Mammary epithelial cell (primary cell): ENCODE measurements at regions of chr3 and their contacts with region 1.

Region 1: GRCh38 chr3:196684548-196685407 is 27.3 kb downstream of the CEP19 start:
- DNase-seq: peak; percentile 35
- H3K4me3 ChIP-seq: no peak overlapping the region
- H3K27ac ChIP-seq: no peak overlapping the region
- H3K4me1 ChIP-seq: peaks cover 4% of the 10 kb centered on the region
- H3K27me3 ChIP-seq: no peaks in the 10 kb centered on the region
- CTCF ChIP-seq: peak; percentile 71 to 84

Region 2: GRCh38 chr3:195886181-195887141 is 798.3 kb before region 1 on chr3:
- CTCF ChIA-PET with region 1: no interaction called
- dilution Hi-C with region 1: no loop called
- in situ Hi-C with region 1: no loop called
- intact Hi-C with region 1: no loop called
- DNase-seq: no peak
- H3K4me3 ChIP-seq: no peak overlapping the region
- H3K27ac ChIP-seq: no peak overlapping the region
- H3K4me1 ChIP-seq: peaks cover 4% of the 10 kb centered on the region
- H3K27me3 ChIP-seq: no peaks in the 10 kb centered on the region
- CTCF ChIP-seq: no peak

Region 3: GRCh38 chr3:196537319-196537984 is 147.3 kb before region 1 on chr3:
- CTCF ChIA-PET with region 1: no interaction called
- dilution Hi-C with region 1: no loop called
- in situ Hi-C with region 1: no loop called
- intact Hi-C with region 1: loop called (anchors 1 kb)
- DNase-seq: peak; percentile 37
- H3K4me3 ChIP-seq: no peak overlapping the region
- H3K27ac ChIP-seq: no peak overlapping the region
- H3K4me1 ChIP-seq: no peaks in the 10 kb centered on the region
- H3K27me3 ChIP-seq: no peaks in the 10 kb centered on the region
- CTCF ChIP-seq: peak; percentile 55 to 67

Region 4: GRCh38 chr3:196609343-196609775 is 75.4 kb before region 1 on chr3:
- CTCF ChIA-PET with region 1: interaction called, 4 read pairs
- dilution Hi-C with region 1: loop called (anchors 5 kb)
- in situ Hi-C with region 1: loop called (anchors 5 to 10 kb)
- intact Hi-C with region 1: loop called (anchors 1 kb)
- DNase-seq: peak; percentile 62
- H3K4me3 ChIP-seq: no peak overlapping the region
- H3K27ac ChIP-seq: no peak overlapping the region
- H3K4me1 ChIP-seq: peaks cover 8% of the 10 kb centered on the region
- H3K27me3 ChIP-seq: no peaks in the 10 kb centered on the region
- CTCF ChIP-seq: peak; percentile 57 to 95

Region 5: DNA sequence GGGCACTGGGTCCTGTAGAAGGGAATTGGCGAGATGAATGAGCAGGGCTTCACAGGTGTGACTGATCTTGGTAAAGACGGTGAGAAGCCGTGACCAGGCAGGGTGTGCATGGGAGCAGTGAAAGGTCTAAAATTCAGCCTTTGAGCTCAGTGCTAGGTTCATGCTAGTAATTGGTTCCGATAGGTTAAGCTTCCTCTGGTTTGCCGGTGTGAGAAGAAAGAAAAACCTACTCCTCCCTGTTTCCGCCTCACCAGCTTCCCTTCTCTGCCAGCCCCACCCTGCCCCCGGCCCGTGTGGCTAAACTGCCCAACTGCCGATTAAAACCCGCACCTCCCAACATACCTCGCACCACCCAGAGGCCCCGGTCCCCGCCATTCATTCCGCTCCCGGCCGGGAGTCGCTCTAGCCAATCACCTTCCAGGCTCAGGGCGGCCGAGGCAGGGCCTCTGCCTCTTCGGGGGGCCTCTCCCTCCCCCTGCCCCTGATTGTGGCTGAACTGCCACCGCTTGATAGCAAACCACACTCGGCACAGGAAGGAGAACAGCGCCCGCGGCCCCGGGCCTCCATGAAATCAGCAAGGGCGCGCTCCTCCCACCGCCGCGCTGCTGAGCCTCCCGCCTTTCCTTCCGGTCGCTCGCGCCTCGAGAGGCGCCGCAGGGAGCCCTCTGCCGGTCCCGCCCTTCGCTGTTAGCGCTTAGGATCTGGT is 52.6 kb before region 1 on chr3:
- CTCF ChIA-PET with region 1: no interaction called
- dilution Hi-C with region 1: loop called (anchors 5 kb)
- in situ Hi-C with region 1: loop called in 1 of 2 experiments (anchors 10 kb)
- intact Hi-C with region 1: no loop called
- DNase-seq: peak; percentile 69
- H3K4me3 ChIP-seq: peak overlapping the region; percentile 59 to 89 (median 63)
- H3K27ac ChIP-seq: peak overlapping the region; percentile 52
- H3K4me1 ChIP-seq: peaks cover 9% of the 10 kb centered on the region
- H3K27me3 ChIP-seq: no peaks in the 10 kb centered on the region
- CTCF ChIP-seq: peak in 1 of 2 donors; percentile 45

Region 6: GRCh38 chr3:196639483-196640296 is 45.1 kb before region 1 on chr3 and contains the start of gene NRROS:
- CTCF ChIA-PET with region 1: no interaction called
- dilution Hi-C with region 1: loop called (anchors 5 kb)
- in situ Hi-C with region 1: loop called in 1 of 2 experiments (anchors 10 kb)
- intact Hi-C with region 1: no loop called
- DNase-seq: peak; percentile 16
- H3K4me3 ChIP-seq: peak within 1 kb of the TSS; percentile 29 to 43 (median 42)
- H3K27ac ChIP-seq: no peak within 1 kb of the TSS
- H3K4me1 ChIP-seq: peaks cover 5% of the 10 kb centered on the region
- H3K27me3 ChIP-seq: peaks cover 4% of the 10 kb centered on the region
- CTCF ChIP-seq: no peak
- total RNA-seq, gene NRROS: 1.1 TPM in 1 of 2 donors, not detected in the other

Region 7: DNA sequence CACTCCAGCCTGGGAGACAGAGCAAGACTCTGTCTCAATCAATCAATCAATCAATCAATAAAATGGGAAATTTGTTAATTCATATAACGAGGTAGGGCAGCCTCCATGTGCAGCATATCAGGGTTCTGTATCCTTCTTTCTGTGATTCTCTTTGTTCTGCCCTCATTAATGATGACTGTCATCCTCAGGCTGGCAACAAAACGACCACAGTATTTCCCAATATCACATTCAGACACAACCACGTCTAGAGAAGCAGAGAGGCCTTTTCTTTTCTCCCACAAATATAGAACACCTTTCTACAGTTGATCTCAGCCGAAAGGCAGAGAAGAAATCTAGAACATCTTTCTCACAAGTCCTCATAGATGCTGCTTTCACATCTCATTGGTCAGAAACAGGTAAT is 16.0 kb after region 1 on chr3:
- CTCF ChIA-PET with region 1: no interaction called
- dilution Hi-C with region 1: no loop called
- in situ Hi-C with region 1: no loop called
- intact Hi-C with region 1: no loop called
- DNase-seq: no peak
- H3K4me3 ChIP-seq: no peak overlapping the region
- H3K27ac ChIP-seq: no peak overlapping the region
- H3K4me1 ChIP-seq: no peaks in the 10 kb centered on the region
- H3K27me3 ChIP-seq: no peaks in the 10 kb centered on the region
- CTCF ChIP-seq: no peak

Region 8: DNA sequence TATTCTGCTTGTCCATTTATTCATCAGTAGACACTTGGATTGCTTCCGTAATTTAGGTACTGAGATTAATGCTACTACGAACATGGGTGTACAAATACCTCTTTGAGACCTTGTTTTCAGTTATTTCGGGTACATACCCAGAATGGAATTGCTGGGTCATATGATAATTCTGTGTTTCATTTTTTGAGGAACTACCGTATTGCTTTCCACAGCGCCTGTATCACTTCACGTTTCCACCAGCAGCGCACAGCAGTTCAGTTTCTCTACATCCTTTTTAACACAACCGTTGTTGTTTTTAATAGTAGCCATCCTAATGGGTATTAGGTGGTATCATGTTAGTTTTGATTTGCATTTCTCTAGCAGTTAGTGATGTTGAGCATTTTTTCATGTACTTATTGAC is 64.3 kb after region 1 on chr3:
- CTCF ChIA-PET with region 1: no interaction called
- dilution Hi-C with region 1: loop called (anchors 5 kb)
- in situ Hi-C with region 1: no loop called
- intact Hi-C with region 1: no loop called
- DNase-seq: no peak
- H3K4me3 ChIP-seq: no peak overlapping the region
- H3K27ac ChIP-seq: no peak overlapping the region
- H3K4me1 ChIP-seq: no peaks in the 10 kb centered on the region
- H3K27me3 ChIP-seq: no peaks in the 10 kb centered on the region
- CTCF ChIP-seq: no peak

Region 9: GRCh38 chr3:196867507-196868296 is 182.9 kb after region 1 on chr3 and contains the start of gene SENP5:
- CTCF ChIA-PET with region 1: no interaction called
- dilution Hi-C with region 1: no loop called
- in situ Hi-C with region 1: no loop called
- intact Hi-C with region 1: no loop called
- DNase-seq: peak; percentile 89
- H3K4me3 ChIP-seq: peak within 1 kb of the TSS; percentile 87 to 99 (median 99)
- H3K27ac ChIP-seq: peak within 1 kb of the TSS; percentile 82
- H3K4me1 ChIP-seq: no peaks in the 10 kb centered on the region
- H3K27me3 ChIP-seq: no peaks in the 10 kb centered on the region
- CTCF ChIP-seq: no peak
- total RNA-seq, gene SENP5: 30.5 to 39.7 TPM

Region 10: DNA sequence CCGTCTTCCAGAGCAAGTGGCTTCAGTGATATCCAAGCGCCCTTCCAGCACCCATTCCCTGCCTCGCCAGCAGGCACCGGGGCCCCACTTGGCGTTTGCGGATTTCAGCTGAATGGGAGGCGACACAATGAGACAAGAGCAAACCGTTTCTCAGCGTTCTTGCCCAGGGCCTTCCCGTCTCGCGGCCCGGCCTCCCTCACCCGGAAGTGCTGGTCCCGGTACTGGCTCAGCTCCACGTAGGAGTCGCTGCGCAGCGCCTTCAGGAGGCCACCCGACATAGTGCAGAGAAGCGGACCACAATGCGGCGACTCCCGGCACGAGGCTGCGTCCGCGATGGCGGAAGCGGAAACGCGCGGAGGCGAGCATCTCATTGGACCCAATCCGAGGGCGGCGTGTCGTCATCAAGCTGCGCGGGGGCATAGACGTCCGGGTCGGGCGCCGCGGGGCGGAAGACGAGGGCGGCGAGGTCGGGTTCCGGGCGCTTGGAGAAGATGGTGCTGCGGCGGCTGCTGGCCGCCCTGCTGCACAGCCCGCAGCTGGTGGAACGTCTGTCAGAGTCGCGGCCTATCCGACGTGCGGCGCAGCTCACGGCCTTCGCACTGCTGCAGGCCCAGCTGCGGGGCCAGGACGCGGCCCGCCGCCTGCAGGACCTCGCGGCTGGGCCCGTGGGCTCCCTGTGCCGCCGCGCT is 257.6 kb after region 1 on chr3 and contains the start of gene NCBP2:
- CTCF ChIA-PET with region 1: no interaction called
- dilution Hi-C with region 1: no loop called
- in situ Hi-C with region 1: no loop called
- intact Hi-C with region 1: loop called (anchors 10 kb)
- DNase-seq: peak; percentile 98
- H3K4me3 ChIP-seq: peak within 1 kb of the TSS; percentile 78 to 96 (median 86)
- H3K27ac ChIP-seq: peak within 1 kb of the TSS; percentile 79
- H3K4me1 ChIP-seq: peaks cover 12% of the 10 kb centered on the region
- H3K27me3 ChIP-seq: no peaks in the 10 kb centered on the region
- CTCF ChIP-seq: peak; percentile 70 to 78
- total RNA-seq, gene NCBP2: 47.5 to 77.0 TPM

Region 11: DNA sequence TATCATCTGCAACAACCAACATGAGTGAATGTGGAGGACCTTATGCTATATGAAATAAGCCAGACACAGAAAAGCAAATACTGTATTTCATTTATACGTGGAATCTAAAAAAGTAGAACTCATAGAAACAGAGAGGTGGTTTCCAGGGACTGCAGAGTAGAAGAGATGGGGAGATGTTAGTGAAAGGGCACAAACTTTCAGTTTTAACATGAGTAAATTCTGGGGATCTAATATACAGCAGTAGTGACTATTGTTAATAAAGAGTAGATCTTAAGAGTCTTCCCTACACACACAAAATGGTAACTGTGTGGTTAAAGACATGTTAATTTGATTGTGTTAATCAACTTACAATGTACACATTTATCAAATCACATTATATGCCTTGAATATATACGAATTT is 365.7 kb after region 1 on chr3:
- CTCF ChIA-PET with region 1: no interaction called
- dilution Hi-C with region 1: no loop called
- in situ Hi-C with region 1: no loop called
- intact Hi-C with region 1: no loop called
- DNase-seq: no peak
- H3K4me3 ChIP-seq: no peak overlapping the region
- H3K27ac ChIP-seq: no peak overlapping the region
- H3K4me1 ChIP-seq: no peaks in the 10 kb centered on the region
- H3K27me3 ChIP-seq: no peaks in the 10 kb centered on the region
- CTCF ChIP-seq: no peak